CD4-positive, alpha-beta memory T cell (primary cell): ENCODE measurements at regions of chr6 and their contacts with region 1.

Region 1: DNA sequence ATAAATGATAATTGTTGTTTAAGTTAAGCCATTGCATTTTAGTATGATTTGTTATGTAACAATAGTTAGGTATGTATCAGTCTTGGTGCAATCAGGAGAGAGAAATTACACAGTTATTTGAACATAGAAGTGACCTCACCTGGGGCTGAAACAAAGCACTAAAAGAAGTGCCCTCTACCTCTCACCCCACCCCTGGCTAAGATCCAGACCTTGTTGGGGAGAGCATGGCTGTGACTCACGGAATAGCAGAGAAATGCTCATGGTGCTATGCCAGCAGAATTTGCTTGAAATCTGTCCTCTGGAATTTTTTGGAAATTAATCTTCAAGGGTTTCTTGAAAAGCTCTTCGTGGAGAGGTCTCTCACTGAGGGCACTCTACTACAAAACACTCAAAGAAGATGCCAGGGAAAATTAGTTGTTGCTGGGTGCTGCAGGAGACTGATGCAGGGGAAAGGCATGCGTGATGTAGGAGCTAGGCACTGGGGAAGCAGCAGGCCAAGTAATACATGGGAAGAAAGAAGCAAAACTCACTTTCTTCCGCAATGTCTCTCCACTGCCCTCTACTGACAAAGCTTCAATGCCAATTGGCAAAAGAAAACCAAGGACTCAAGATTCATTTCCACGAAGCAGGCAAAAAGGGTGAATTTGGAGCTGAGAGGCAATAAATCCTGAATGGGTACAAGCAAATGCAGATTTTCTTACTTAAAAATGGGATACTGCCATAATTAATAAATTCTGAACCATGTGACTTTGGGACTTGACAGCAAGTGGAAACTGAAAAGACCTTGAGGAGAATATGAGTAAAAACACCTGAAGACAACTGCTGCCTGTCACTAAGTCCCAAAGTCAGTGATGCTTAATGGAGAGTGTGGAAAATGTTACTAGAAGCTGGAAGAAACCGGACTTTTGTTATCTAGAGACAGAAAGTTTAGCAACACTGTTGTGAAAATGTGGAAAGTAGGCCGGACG is 136.3 kb upstream of the ZNF184 start:
- DNase-seq: peak in 1 of 5 donors; percentile 25
- H3K4me3 ChIP-seq: no peak overlapping the region
- H3K4me3 Mint-ChIP-seq: no peak overlapping the region
- H3K27ac ChIP-seq: no peak overlapping the region
- H3K27ac Mint-ChIP-seq: no peak overlapping the region
- H3K4me1 ChIP-seq: peaks cover 8% of the 10 kb centered on the region
- H3K4me1 Mint-ChIP-seq: peaks cover 7 to 16% (median 11%) of the 10 kb centered on the region in 4 donors
- H3K27me3 ChIP-seq: peaks cover 20% of the 10 kb centered on the region
- H3K27me3 Mint-ChIP-seq: peaks cover 41 to 45% of the 10 kb centered on the region in 2 donors

Region 2: GRCh38 chr6:27312146-27312949 is 296.9 kb before region 1 on chr6 and contains the start of gene POM121L2:
- CTCF ChIA-PET with region 1: interaction called, 8 read pairs
- POLR2A ChIA-PET with region 1: interaction called, 4 read pairs
- intact Hi-C with region 1: loop called (anchors 1 kb)
- DNase-seq: peak; percentile 50 to 68 (median 61)
- H3K4me3 ChIP-seq: peak within 1 kb of the TSS; percentile 44 to 57
- H3K4me3 Mint-ChIP-seq: peak within 1 kb of the TSS; percentile 81 to 86 (median 83)
- H3K27ac ChIP-seq: no peak within 1 kb of the TSS
- H3K27ac Mint-ChIP-seq: peak within 1 kb of the TSS in 3 of 7 donors; percentile 7 to 37 (median 21)
- H3K4me1 ChIP-seq: peaks cover 5% of the 10 kb centered on the region
- H3K4me1 Mint-ChIP-seq: peaks cover 0 to 14% (median 7%) of the 10 kb centered on the region in 4 donors
- H3K27me3 ChIP-seq: peaks cover 26% of the 10 kb centered on the region
- H3K27me3 Mint-ChIP-seq: peaks cover 39 to 55% of the 10 kb centered on the region in 2 donors
- total RNA-seq, gene POM121L2: not detected

Region 3: DNA sequence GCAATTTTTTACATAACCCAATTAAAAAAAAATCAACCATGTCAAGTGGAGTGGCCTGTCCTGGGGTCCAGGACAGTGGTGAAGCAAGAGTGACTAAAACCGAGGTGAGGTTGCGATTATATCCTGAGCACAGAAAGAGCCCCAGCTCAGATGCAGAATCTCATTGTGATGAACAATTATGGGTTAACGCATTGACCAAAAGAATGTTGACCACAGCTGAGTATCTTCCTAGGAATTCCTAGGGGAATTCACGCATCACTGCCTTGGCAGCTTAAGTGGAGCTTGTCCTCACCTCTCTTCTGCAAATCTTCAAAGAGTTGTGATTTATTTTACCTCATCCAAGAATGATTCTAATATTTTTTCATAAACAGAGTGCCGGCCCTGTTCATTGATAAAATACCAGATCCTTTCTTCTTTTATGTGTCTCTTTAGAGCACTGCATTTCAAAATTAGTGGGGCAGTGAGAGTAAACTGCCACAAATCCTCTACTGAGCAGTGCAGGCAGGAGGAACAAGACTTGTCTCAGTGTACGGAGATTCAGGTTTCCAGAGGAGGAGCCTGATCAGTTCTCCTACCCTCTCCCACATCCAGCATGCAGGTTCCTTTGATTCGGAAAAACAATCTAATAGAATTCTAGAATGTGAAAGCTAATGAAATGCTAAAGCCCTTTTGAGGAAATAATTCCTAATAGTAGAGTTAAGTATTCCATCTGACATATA is 76.2 kb before region 1 on chr6:
- CTCF ChIA-PET with region 1: no interaction called
- POLR2A ChIA-PET with region 1: no interaction called
- intact Hi-C with region 1: no loop called
- DNase-seq: no peak
- H3K4me3 ChIP-seq: no peak overlapping the region
- H3K4me3 Mint-ChIP-seq: no peak overlapping the region
- H3K27ac ChIP-seq: no peak overlapping the region
- H3K27ac Mint-ChIP-seq: no peak overlapping the region
- H3K4me1 ChIP-seq: no peaks in the 10 kb centered on the region
- H3K4me1 Mint-ChIP-seq: no peaks in the 10 kb centered on the region
- H3K27me3 ChIP-seq: no peaks in the 10 kb centered on the region
- H3K27me3 Mint-ChIP-seq: peaks cover 32 to 53% of the 10 kb centered on the region in 2 donors

Region 4: GRCh38 chr6:27619436-27619835 is 10.2 kb after region 1 on chr6:
- CTCF ChIA-PET with region 1: interaction called, 13 read pairs
- POLR2A ChIA-PET with region 1: no interaction called
- intact Hi-C with region 1: no loop called
- DNase-seq: no peak
- H3K4me3 ChIP-seq: no peak overlapping the region
- H3K4me3 Mint-ChIP-seq: no peak overlapping the region
- H3K27ac ChIP-seq: no peak overlapping the region
- H3K27ac Mint-ChIP-seq: no peak overlapping the region
- H3K4me1 ChIP-seq: peaks cover 6% of the 10 kb centered on the region
- H3K4me1 Mint-ChIP-seq: peaks cover 6 to 14% (median 11%) of the 10 kb centered on the region in 4 donors
- H3K27me3 ChIP-seq: peaks cover 7% of the 10 kb centered on the region
- H3K27me3 Mint-ChIP-seq: peaks cover 53 to 55% of the 10 kb centered on the region in 2 donors